Mucosa of descending colon (tissue), 3 donors: ENCODE measurements at regions of chr17 and their contacts with region 1.

Region 1: GRCh38 chr17:1516388-1517161 is at the start of gene INPP5K:
- DNase-seq: peak; percentile 98 to 100 (median 99)
- ATAC-seq: peak; percentile 91
- H3K4me3 ChIP-seq: peak within 1 kb of the TSS; percentile 92
- H3K4me1 ChIP-seq: peaks cover 34% of the 10 kb centered on the region
- CTCF ChIP-seq: no peak
- total RNA-seq, gene INPP5K: 43.7 to 49.9 (median 47.6) TPM

Region 2: GRCh38 chr17:1275962-1276736 is 240.4 kb before region 1 on chr17:
- intact Hi-C with region 1: loop called in 1 of 2 experiments (anchors 10 kb)
- DNase-seq: peak in 2 of 3 donors; percentile 76 to 80
- ATAC-seq: peak; percentile 77
- H3K4me3 ChIP-seq: no peak overlapping the region
- H3K4me1 ChIP-seq: no peaks in the 10 kb centered on the region
- CTCF ChIP-seq: peak; percentile 47

Region 3: DNA sequence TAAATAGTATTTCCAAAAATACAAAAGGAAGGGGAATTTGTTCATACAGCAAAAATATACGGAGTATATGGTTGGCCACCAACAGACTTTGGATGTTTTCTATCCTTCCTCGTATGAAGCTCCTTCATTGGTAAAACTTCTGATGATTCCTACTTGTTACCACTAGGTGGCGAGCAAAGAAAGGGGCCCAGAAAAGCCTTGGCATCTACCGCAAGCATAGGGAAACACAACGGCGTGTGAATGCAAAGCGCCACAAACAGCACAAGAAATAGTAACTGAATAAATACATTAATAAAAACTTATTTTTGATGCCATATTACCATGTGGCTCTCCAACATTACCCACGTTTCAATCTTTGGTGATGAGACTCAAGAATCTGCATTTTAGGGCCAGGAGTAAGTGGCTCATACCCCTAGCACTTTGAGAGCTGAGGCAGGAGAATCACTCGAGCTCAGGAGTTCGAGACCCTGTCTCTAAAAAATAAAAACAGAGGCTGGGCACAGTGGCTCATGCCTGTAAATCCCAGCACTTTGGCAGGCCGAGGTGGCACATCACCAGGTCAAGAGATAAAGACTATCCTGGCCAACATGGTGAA is 151.0 kb before region 1 on chr17:
- intact Hi-C with region 1: loop called (anchors 5 to 10 kb)
- DNase-seq: peak in 1 of 3 donors; percentile 63
- ATAC-seq: peak; percentile 93
- H3K4me3 ChIP-seq: no peak overlapping the region
- H3K4me1 ChIP-seq: peaks cover 33% of the 10 kb centered on the region
- CTCF ChIP-seq: peak; percentile 62

Region 4: DNA sequence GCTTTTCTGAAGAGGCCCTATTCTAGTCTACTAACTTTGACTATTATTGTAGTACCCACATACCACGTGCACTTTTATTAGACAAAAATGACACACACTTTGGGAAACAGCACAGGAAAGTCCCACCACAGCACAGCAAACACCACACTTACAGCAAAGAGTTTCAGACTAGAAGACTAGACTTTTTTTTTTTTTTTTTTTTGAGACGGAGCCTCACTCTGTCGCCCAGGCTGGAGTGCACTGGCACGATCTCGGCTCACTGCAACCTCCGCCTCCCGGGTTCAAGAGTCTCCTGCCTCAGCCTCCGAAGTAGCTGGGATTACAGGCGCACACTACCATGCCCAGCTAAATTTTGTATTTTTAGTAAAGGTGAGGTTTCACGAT is 136.7 kb before region 1 on chr17:
- intact Hi-C with region 1: loop called in 1 of 2 experiments (anchors 10 kb)
- DNase-seq: no peak
- ATAC-seq: no peak
- H3K4me3 ChIP-seq: no peak overlapping the region
- H3K4me1 ChIP-seq: peaks cover 66% of the 10 kb centered on the region
- CTCF ChIP-seq: no peak

Region 5: GRCh38 chr17:1413281-1413791 is 103.2 kb before region 1 on chr17:
- intact Hi-C with region 1: no loop called
- DNase-seq: peak in 2 of 3 donors; percentile 33 to 44
- ATAC-seq: peak; percentile 73
- H3K4me3 ChIP-seq: no peak overlapping the region
- H3K4me1 ChIP-seq: no peaks in the 10 kb centered on the region
- CTCF ChIP-seq: no peak